CD8-positive, alpha-beta T cell (primary cell): ENCODE measurements at regions of chr1 and their contacts with region 1.

Region 1: DNA sequence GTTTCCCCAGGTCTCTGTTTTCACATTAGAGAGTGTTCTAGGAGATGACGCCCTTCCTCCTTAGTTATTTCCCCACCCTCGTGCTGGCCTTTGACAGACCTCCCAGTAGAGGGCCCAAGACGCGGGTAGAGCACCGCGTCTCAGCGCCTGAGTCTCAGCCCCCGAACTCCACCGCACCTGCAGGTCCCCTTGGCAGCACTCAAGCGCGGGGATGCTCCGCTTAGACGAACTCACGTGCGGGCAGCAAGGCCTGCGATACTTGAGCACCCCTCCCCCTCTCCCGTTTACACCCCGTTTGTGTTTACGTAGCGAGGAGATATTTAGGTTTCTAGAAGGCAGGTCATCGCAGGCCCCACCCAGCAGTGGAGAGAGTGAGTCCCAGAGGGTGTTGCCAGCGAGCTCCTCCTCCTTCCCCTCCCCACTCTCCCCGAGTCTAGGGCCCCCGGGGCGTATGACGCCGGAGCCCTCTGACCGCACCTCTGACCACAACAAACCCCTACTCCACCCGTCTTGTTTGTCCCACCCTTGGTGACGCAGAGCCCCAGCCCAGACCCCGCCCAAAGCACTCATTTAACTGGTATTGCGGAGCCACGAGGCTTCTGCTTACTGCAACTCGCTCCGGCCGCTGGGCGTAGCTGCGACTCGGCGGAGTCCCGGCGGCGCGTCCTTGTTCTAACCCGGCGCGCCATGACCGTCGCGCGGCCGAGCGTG is at the start of gene CD55:
- DNase-seq: peak; percentile 98 to 100 (median 99)
- ATAC-seq: peak; percentile 88
- H3K4me3 ChIP-seq: peak within 1 kb of the TSS; percentile 77 to 89
- H3K4me3 Mint-ChIP-seq: peak within 1 kb of the TSS; percentile 98
- H3K27ac ChIP-seq: peak within 1 kb of the TSS; percentile 94 to 98
- H3K27ac Mint-ChIP-seq: peak within 1 kb of the TSS; percentile 99
- H3K4me1 ChIP-seq: peaks cover 21% of the 10 kb centered on the region
- H3K4me1 Mint-ChIP-seq: peaks cover 44% of the 10 kb centered on the region
- H3K27me3 ChIP-seq: no peaks in the 10 kb centered on the region
- H3K27me3 Mint-ChIP-seq: no peaks in the 10 kb centered on the region
- CTCF ChIP-seq: peak; percentile 36
- total RNA-seq, gene CD55: 256 to 261 TPM

Region 2: DNA sequence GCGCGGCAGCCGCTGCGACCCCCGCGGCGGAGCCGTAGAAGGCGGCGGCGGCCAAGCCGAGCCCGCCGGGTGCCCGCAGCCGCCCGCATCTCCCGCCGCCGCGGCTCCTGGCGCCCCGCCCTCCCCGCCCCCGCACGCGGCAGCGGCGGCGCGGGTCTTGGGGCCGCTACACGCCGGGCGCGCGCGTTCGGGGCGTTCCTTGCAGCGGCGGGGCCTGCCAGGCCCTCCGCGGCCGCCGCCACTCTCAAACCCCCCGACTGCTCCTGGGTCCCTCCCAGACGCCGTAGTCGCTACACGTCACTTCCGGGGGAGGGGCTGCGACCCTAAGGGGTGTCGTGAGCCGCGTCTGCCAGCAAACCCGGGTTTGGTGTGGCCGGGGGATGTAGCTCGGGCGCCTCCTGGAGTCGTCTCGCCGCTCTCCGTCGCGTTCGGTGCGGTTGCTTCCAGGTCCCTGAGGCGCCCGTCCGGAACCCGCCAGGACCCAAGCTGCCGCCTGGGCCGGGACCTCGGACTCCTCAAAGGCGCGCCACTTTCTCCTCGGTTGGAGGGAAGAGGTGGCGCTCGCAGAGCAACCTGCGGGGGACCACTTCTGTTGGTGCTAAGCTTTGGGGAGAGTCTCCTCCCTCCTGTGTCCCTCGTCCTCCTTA is 1689.4 kb before region 1 on chr1 and contains the start of gene ELK4:
- CTCF ChIA-PET with region 1: no interaction called
- POLR2A ChIA-PET with region 1: no interaction called
- intact Hi-C with region 1: loop called in 1 of 2 experiments (anchors 5 kb)
- DNase-seq: peak; percentile 99 to 100 (median 100)
- ATAC-seq: peak; percentile 78
- H3K4me3 ChIP-seq: peak within 1 kb of the TSS; percentile 64 to 71
- H3K4me3 Mint-ChIP-seq: peak within 1 kb of the TSS; percentile 89
- H3K27ac ChIP-seq: peak within 1 kb of the TSS; percentile 75 to 95
- H3K27ac Mint-ChIP-seq: peak within 1 kb of the TSS; percentile 99
- H3K4me1 ChIP-seq: peaks cover 37% of the 10 kb centered on the region
- H3K4me1 Mint-ChIP-seq: peaks cover 44% of the 10 kb centered on the region
- H3K27me3 ChIP-seq: no peaks in the 10 kb centered on the region
- H3K27me3 Mint-ChIP-seq: no peaks in the 10 kb centered on the region
- CTCF ChIP-seq: peak; percentile 78
- total RNA-seq, gene ELK4: 142 to 147 TPM

Region 3: DNA sequence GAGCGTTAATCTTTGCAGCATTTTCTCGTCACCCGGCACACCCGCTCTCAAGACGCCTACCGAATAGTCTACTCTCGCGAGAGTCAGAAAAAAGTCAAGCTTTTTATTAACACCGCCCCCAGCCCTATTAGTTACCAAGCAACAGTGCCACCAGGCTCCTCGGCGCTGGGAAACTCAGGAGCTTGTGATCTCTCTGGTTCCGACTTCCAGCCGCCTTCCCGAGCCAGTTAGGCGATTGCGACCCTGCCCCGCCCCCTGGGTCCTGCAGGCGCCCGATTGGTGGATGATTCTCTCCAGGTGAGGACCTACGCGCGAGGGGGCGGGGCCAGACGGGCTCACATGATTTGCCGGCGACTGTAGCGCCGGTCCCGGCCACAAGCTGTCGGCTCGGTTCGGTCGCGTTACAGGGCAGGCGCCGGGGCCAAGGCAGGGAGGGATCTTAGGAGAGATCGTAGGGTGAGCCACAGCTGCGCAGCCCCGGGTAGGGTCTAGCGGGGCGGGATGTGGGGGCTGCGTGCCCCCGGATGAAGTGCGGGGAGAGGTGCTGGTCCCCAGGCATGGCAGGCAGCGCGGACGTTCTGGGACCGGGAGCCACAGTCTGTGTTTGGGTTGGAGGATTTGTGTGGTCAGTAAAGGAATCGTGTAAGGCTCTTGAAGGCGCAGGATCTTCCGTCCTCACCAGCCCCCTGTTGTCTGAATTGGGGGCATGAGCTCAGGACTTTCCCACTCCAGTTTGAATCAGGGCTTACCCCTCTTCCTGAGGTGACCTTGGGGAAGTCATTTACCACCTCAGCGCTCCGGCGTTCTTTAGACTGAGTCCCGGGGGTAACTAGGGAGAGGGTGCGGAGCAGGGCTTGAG is 268.1 kb before region 1 on chr1 and contains the start of gene PFKFB2:
- CTCF ChIA-PET with region 1: interaction called, 5 read pairs
- POLR2A ChIA-PET with region 1: interaction called, 3 read pairs
- intact Hi-C with region 1: loop called (anchors 2 to 5 kb)
- DNase-seq: peak; percentile 88 to 97 (median 95)
- ATAC-seq: peak; percentile 87
- H3K4me3 ChIP-seq: peak within 1 kb of the TSS; percentile 70 to 82
- H3K4me3 Mint-ChIP-seq: peak within 1 kb of the TSS; percentile 97
- H3K27ac ChIP-seq: peak within 1 kb of the TSS; percentile 70 to 83
- H3K27ac Mint-ChIP-seq: peak within 1 kb of the TSS; percentile 98
- H3K4me1 ChIP-seq: peaks cover 28% of the 10 kb centered on the region
- H3K4me1 Mint-ChIP-seq: peaks cover 44% of the 10 kb centered on the region
- H3K27me3 ChIP-seq: no peaks in the 10 kb centered on the region
- H3K27me3 Mint-ChIP-seq: no peaks in the 10 kb centered on the region
- CTCF ChIP-seq: peak; percentile 21
- total RNA-seq, gene PFKFB2: 8.1 to 8.5 TPM

Region 4: GRCh38 chr1:207282058-207282457 is 39.2 kb before region 1 on chr1:
- CTCF ChIA-PET with region 1: no interaction called
- POLR2A ChIA-PET with region 1: interaction called, 19 read pairs
- intact Hi-C with region 1: loop called in 1 of 2 experiments (anchors 2 kb)
- DNase-seq: no peak
- ATAC-seq: peak; percentile 20
- H3K4me3 ChIP-seq: no peak overlapping the region
- H3K4me3 Mint-ChIP-seq: peak overlapping the region; percentile 15
- H3K27ac ChIP-seq: no peak overlapping the region
- H3K27ac Mint-ChIP-seq: peak overlapping the region; percentile 1
- H3K4me1 ChIP-seq: peaks cover 32% of the 10 kb centered on the region
- H3K4me1 Mint-ChIP-seq: peaks cover 68% of the 10 kb centered on the region
- H3K27me3 ChIP-seq: no peaks in the 10 kb centered on the region
- H3K27me3 Mint-ChIP-seq: peaks cover 2% of the 10 kb centered on the region
- CTCF ChIP-seq: no peak

Region 5: GRCh38 chr1:207362962-207363858 is 42.0 kb after region 1 on chr1:
- CTCF ChIA-PET with region 1: interaction called, 6 read pairs
- POLR2A ChIA-PET with region 1: interaction called, 7 read pairs
- intact Hi-C with region 1: loop called (anchors 1 to 5 kb)
- DNase-seq: peak in 4 of 9 experiments; percentile 25 to 73 (median 36)
- ATAC-seq: peak; percentile 93
- H3K4me3 ChIP-seq: no peak overlapping the region
- H3K4me3 Mint-ChIP-seq: no peak overlapping the region
- H3K27ac ChIP-seq: peak overlapping the region in 1 of 2 experiments; percentile 22
- H3K27ac Mint-ChIP-seq: no peak overlapping the region
- H3K4me1 ChIP-seq: peaks cover 34% of the 10 kb centered on the region
- H3K4me1 Mint-ChIP-seq: peaks cover 8% of the 10 kb centered on the region
- H3K27me3 ChIP-seq: no peaks in the 10 kb centered on the region
- H3K27me3 Mint-ChIP-seq: no peaks in the 10 kb centered on the region
- CTCF ChIP-seq: no peak

Region 6: GRCh38 chr1:207463021-207463420 is 141.8 kb after region 1 on chr1:
- CTCF ChIA-PET with region 1: no interaction called
- POLR2A ChIA-PET with region 1: interaction called, 8 read pairs
- intact Hi-C with region 1: loop called (anchors 2 to 5 kb)
- DNase-seq: peak in 1 of 9 experiments; percentile 9
- ATAC-seq: no peak
- H3K4me3 ChIP-seq: no peak overlapping the region
- H3K4me3 Mint-ChIP-seq: no peak overlapping the region
- H3K27ac ChIP-seq: no peak overlapping the region
- H3K27ac Mint-ChIP-seq: peak overlapping the region; percentile 28
- H3K4me1 ChIP-seq: peaks cover 65% of the 10 kb centered on the region
- H3K4me1 Mint-ChIP-seq: peaks cover 69% of the 10 kb centered on the region
- H3K27me3 ChIP-seq: no peaks in the 10 kb centered on the region
- H3K27me3 Mint-ChIP-seq: no peaks in the 10 kb centered on the region
- CTCF ChIP-seq: no peak

Region 7: DNA sequence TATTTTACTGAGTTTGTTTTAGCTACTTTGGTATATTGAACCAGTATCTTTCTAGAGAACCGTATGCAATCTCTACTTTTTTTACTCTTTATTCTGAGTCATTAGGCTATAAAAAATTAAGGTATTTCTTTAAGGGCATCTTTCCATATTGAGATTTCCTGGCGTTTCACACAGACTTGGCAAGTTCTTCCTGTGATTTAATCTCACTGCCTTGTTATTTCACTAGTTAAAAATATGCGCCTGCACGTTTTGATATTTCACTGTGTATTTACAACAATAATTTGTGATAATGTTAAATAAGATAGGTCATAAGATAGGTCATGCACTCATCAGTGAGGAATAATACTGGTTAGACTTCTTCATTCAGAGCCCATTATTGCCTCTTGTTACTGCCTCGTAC is 307.5 kb after region 1 on chr1:
- CTCF ChIA-PET with region 1: no interaction called
- POLR2A ChIA-PET with region 1: no interaction called
- intact Hi-C with region 1: no loop called
- DNase-seq: no peak
- ATAC-seq: no peak
- H3K4me3 ChIP-seq: no peak overlapping the region
- H3K4me3 Mint-ChIP-seq: no peak overlapping the region
- H3K27ac ChIP-seq: no peak overlapping the region
- H3K27ac Mint-ChIP-seq: no peak overlapping the region
- H3K4me1 ChIP-seq: no peaks in the 10 kb centered on the region
- H3K4me1 Mint-ChIP-seq: no peaks in the 10 kb centered on the region
- H3K27me3 ChIP-seq: no peaks in the 10 kb centered on the region
- H3K27me3 Mint-ChIP-seq: no peaks in the 10 kb centered on the region
- CTCF ChIP-seq: no peak

Region 8: GRCh38 chr1:207828485-207829158 is 507.4 kb after region 1 on chr1:
- CTCF ChIA-PET with region 1: no interaction called
- POLR2A ChIA-PET with region 1: no interaction called
- intact Hi-C with region 1: loop called (anchors 2 to 5 kb)
- DNase-seq: peak in 8 of 9 experiments; percentile 35 to 83 (median 64)
- ATAC-seq: peak; percentile 19
- H3K4me3 ChIP-seq: no peak overlapping the region
- H3K4me3 Mint-ChIP-seq: no peak overlapping the region
- H3K27ac ChIP-seq: peak overlapping the region in 1 of 2 experiments; percentile 29
- H3K27ac Mint-ChIP-seq: peak overlapping the region; percentile 47
- H3K4me1 ChIP-seq: peaks cover 76% of the 10 kb centered on the region
- H3K4me1 Mint-ChIP-seq: peaks cover 94% of the 10 kb centered on the region
- H3K27me3 ChIP-seq: no peaks in the 10 kb centered on the region
- H3K27me3 Mint-ChIP-seq: no peaks in the 10 kb centered on the region
- CTCF ChIP-seq: peak; percentile 78